ENCODE measurements at regions of chr2 and their contacts with region 1.

Region 1: DNA sequence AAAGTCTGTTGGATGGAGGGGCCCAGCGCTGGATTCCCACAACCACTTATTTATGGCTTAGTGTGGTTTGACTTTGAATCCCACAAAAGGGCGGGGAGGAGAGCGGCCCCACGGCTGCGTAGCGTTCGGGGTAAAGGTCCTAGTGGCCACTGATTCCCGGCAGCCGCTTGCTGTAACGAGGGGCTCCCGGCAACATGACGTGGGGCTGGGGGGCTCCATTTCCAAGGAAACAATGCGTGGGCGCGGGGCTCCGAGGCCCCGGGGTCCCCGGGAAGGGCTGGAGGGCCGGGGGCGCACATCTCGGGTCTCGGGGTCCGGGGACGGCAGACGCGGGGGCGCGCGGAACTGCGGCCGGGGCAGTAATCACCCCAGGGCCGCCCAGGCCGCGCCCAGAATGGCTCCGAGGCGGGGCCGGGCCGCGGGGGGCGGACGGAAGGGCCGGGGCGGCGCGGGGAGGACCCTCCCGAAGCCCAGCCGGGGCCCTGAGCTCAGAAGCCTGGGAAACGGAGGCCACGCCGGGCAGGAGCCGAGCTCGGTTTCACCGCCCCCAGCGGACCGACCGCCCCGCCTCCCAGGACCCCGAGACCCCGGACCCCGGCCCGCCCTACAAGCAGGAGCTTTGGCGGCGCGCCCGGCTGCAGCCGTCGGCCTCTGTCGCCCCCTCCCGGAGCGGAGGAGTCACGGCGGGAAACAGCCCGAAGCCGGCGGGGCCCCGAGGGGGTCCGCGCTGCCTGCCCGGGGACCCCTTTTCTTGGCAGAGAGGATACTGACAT is 11.9 kb upstream of the MLPH start:
- DNase-seq: peak; percentile 77
- ATAC-seq: peak; percentile 93
- H3K4me3 ChIP-seq: peak overlapping the region; percentile 43
- H3K27ac ChIP-seq: peak overlapping the region; percentile 95
- H3K4me1 ChIP-seq: peaks cover 20% of the 10 kb centered on the region
- H3K27me3 ChIP-seq: no peaks in the 10 kb centered on the region
- CTCF ChIP-seq: peak; percentile 85
- POLR2A ChIP-seq: peak; percentile 51
- RAD21 ChIP-seq: peak; percentile 71

Region 2: DNA sequence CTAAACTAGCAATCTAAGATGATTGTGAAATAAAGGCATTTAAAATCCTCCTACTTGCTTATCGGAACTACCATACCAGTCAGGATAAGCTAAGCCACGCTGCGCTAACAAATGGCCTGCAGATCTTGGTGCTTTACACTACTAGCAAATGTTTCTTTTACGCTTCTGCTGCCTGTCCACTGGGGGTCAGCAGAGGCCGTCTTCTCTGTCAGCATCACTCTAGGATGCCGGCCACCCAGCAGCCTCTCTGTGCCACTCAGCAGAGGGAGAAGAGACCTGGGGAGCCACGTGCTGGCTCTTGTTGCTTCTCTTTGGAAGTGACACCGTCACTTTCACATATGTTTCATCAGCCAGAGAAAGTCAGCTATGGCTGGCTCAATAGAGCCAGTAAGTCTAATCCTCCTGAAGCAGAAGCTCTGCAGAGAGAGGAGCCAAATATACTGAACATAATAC is 352.9 kb before region 1 on chr2:
- CTCF ChIA-PET with region 1: interaction called, 7 read pairs
- POLR2A ChIA-PET with region 1: no interaction called
- dilution Hi-C with region 1: no loop called
- in situ Hi-C with region 1: no loop called
- intact Hi-C with region 1: loop called (anchors 10 kb)
- DNase-seq: peak; percentile 87
- ATAC-seq: peak; percentile 94
- H3K4me3 ChIP-seq: no peak overlapping the region
- H3K27ac ChIP-seq: peak overlapping the region; percentile 53; the same call in 1 of the 2 replicates
- H3K4me1 ChIP-seq: peaks cover 13% of the 10 kb centered on the region
- H3K27me3 ChIP-seq: no peaks in the 10 kb centered on the region
- CTCF ChIP-seq: peak; percentile 84
- POLR2A ChIP-seq: 0 out of 2 replicates have a peak, but pooled peaks have one; percentile 34
- RAD21 ChIP-seq: peak; percentile 93

Region 3: DNA sequence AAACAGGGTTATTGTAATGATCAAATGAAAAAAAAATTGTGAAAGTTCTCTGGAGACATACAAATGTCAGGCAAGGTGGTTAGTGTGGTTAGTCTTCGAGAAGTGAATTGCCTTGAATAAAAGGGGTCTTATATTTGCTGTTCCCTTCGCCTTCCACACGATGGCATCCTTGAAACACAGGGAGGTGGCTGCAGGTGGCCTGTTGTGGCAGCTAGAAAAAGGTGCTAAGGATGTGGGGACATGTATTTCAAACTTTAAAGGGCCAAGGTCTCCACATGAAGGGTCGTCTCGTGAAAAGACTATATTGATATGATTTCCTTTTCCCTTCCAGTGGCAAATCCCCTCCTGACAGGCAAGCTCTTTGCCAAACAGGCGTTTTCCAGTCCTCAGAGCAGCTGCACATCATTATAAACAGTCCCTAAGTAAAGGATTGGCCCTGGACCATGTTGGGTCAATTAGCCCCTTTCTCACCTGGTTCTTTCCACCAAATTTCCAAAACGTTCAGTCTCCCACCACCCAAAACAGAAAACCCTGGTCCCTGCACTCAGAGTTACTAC is 321.0 kb before region 1 on chr2:
- CTCF ChIA-PET with region 1: interaction called, 4 read pairs
- POLR2A ChIA-PET with region 1: no interaction called
- dilution Hi-C with region 1: no loop called
- in situ Hi-C with region 1: loop called (anchors 10 kb)
- intact Hi-C with region 1: no loop called
- DNase-seq: peak; percentile 81
- ATAC-seq: no peak; the same call in 1 of the 2 replicates
- H3K4me3 ChIP-seq: no peak overlapping the region
- H3K27ac ChIP-seq: peak overlapping the region; percentile 1; the same call in 1 of the 2 replicates
- H3K4me1 ChIP-seq: peaks cover 30% of the 10 kb centered on the region
- H3K27me3 ChIP-seq: no peaks in the 10 kb centered on the region
- CTCF ChIP-seq: peak; percentile 91
- POLR2A ChIP-seq: 0 out of 2 replicates have a peak, but pooled peaks have one; percentile 21
- RAD21 ChIP-seq: peak; percentile 97

Region 4: DNA sequence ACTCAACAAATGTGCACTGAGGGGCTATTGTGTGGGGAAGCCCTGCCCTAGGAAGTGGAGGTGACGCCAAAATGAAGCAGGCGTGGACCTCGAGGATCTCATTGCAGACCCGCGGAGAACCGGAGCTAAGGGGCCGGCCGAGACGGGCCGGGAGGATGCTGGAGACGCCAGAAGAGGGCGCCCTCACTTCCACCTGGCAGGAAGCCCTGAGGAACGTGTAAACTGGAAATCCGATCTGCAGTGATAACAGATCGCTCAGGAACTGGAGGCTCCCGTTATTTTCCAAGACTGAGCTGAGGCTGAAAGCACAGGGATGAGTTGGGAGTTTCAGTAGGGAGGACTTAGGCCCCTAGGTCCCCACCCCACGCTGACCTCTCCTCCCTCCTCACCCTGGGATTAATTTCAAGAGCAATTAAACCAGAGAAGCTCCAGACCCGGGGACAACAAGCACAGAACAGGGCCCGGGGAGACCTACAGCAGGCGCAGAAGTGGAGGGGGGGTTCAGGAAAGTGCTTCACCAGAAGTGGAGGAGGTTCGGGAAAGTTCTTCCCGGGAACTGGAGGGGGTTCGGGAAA is 53.5 kb before region 1 on chr2:
- CTCF ChIA-PET with region 1: interaction called, 16 read pairs
- POLR2A ChIA-PET with region 1: interaction called, 5 read pairs
- dilution Hi-C with region 1: no loop called
- in situ Hi-C with region 1: loop called (anchors 5 kb)
- intact Hi-C with region 1: loop called (anchors 1 kb)
- DNase-seq: peak; percentile 90
- ATAC-seq: peak; percentile 85
- H3K4me3 ChIP-seq: peak overlapping the region; percentile 7; the same call in 1 of the 2 replicates
- H3K27ac ChIP-seq: peak overlapping the region; percentile 36
- H3K4me1 ChIP-seq: peaks cover 13% of the 10 kb centered on the region
- H3K27me3 ChIP-seq: no peaks in the 10 kb centered on the region
- CTCF ChIP-seq: peak; percentile 89
- POLR2A ChIP-seq: peak; percentile 59
- RAD21 ChIP-seq: peak; percentile 80